ENCODE measurements at regions of chr3 and their contacts with region 1.

Region 1: DNA sequence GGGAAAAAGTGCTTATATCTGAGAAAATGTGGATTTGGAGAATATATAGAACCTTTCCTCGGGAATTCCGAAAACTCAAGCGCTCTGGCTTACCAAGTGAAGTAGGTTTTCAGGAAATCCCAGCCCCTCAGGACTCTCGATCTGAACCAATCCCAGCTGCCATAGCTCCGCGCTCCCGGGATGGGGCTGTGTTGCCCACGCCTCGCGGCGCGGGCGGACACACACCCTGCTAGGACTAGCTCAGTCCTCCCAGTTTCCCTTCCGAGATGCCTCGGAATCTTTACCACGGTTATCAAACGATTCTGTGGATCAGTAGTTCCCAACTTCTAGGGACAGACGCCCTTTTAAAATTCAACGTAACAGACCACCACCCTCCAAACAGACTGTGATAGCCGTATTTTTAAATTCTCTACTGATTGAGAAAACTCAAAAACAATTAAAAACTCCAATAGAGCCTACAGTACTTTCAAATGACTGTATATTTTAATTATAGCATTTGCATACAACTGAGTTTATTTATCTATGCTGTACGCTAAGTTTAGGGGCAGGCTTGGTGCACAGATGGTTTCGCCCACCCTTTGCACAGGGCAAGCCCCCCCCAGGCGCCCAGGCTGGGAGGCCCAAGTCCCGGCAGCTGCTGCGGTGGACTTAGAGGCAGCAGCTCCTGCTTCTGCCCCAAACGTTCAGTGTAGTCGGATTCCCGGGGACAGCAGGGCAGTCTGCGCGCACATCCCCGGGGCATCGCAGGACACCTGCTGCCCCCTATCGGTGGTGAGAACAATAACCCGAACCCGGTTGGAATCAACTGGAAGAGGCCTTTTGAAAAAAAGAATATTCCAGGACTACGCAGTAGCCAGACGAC is 52.3 kb downstream of the CCDC54 start:
- DNase-seq: peak; percentile 21
- H3K4me3 ChIP-seq: peak overlapping the region; percentile 21 to 72 (median 70)
- H3K27ac ChIP-seq: peak overlapping the region; percentile 2
- H3K4me1 ChIP-seq: peaks cover 27% of the 10 kb centered on the region
- H3K27me3 ChIP-seq: no peaks in the 10 kb centered on the region
- CTCF ChIP-seq: peak; percentile 83 to 89 (median 89)

Region 2: DNA sequence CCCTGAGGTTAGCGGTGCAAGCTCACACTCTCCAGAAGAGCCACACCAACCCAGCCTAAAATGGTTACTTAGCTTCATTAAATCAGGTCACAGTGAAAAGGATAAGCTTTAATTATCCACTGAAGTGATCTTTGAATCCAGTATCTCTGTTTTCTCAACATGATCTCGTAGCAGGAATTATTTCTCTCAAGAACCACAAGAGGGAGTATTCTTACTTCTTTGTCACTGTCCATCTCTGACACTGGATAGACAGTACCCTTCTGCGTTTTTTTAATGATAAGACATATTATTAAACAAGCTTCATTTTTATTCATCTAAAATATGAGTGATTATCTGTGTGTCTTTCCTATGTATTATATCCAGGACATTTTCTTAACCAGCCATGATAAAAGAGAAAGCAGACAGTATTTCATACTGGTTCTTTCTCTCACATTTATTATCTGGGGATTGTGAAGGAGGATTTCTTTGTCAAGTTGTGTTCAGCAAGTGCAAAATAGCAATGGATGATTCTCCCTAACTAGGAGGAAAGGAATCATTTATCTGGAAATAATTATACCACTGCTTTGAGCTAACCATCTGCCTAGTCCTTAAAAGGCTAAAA is 157.7 kb before region 1 on chr3:
- dilution Hi-C with region 1: loop called (anchors 25 kb)
- DNase-seq: peak; percentile 9
- H3K4me3 ChIP-seq: no peak overlapping the region
- H3K27ac ChIP-seq: no peak overlapping the region
- H3K4me1 ChIP-seq: no peaks in the 10 kb centered on the region
- H3K27me3 ChIP-seq: no peaks in the 10 kb centered on the region
- CTCF ChIP-seq: peak in 2 of 3 experiments; percentile 32 to 59

Measured in keratinocyte (primary cell).